Cardiac septum (tissue), 1 donor: ENCODE measurements at regions of chr1 and their contacts with region 1.

Region 1: GRCh38 chr1:72296481-72296880 is 14.1 kb upstream of the NEGR1 start:
- DNase-seq: no peak

Region 2: GRCh38 chr1:72341661-72342060 is 45.2 kb after region 1 on chr1:
- intact Hi-C with region 1: loop called (anchors 1 kb)
- DNase-seq: no peak